Activated CD8-positive, alpha-beta T cell treated with anti-CD3 and anti-CD28 coated beads for 36 hours (primary cell): ENCODE measurements at regions of chr2 and their contacts with region 1.

Region 1: DNA sequence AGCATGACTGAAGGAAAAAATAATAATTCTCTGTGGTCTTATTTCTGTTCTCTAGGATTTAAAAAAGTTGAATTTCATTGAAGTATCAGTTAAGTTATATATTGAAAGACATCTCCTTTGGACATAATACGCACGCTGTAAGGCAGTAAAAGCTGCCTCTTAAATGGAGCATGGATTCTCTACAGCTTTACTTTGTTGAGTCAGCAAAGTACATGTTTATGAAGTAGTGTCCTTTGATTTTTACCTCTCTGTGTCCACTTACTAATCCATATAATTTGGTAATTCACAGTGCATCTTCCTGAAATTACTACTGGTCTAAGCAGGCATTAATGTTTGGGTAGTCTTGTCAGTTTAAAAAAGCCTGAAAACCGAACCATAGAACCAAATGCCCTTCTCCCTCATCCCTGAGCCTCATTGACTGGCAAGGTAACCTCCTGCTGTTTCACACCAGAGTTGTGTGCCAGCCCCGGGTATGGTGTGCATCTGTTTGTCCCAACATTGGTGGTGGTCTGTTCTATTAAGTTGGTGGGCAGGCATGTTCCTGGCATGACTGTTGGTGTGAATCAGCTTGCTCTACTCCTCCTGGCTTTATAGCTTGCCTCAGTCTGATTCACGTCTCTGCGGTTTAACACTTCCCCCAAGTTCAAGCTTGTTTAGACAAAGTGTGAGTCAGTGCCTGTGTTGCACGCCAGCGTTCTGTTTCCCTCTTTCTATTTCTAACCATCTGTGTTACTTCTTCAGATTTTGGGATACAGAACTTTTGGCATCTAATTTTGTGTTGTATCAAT is 71.0 kb upstream of the ITM2C start:
- DNase-seq: peak; percentile 91
- ATAC-seq: peak; percentile 87
- H3K4me3 Mint-ChIP-seq: peak overlapping the region; percentile 72
- H3K27ac Mint-ChIP-seq: no peak overlapping the region
- H3K4me1 Mint-ChIP-seq: peaks cover 54% of the 10 kb centered on the region
- H3K27me3 Mint-ChIP-seq: no peaks in the 10 kb centered on the region
- CTCF ChIP-seq: no peak

Region 2: GRCh38 chr2:229821316-229821715 is 972.5 kb before region 1 on chr2:
- CTCF ChIA-PET with region 1: no interaction called
- POLR2A ChIA-PET with region 1: no interaction called
- intact Hi-C with region 1: loop called (anchors 5 kb)
- DNase-seq: no peak
- ATAC-seq: no peak
- H3K4me3 Mint-ChIP-seq: no peak overlapping the region
- H3K27ac Mint-ChIP-seq: no peak overlapping the region
- H3K4me1 Mint-ChIP-seq: peaks cover 25% of the 10 kb centered on the region
- H3K27me3 Mint-ChIP-seq: no peaks in the 10 kb centered on the region
- CTCF ChIP-seq: no peak

Region 3: GRCh38 chr2:230643576-230644291 is 150.0 kb before region 1 on chr2:
- CTCF ChIA-PET with region 1: interaction called, 8 read pairs
- POLR2A ChIA-PET with region 1: interaction called, 4 read pairs
- intact Hi-C with region 1: loop called (anchors 2 kb)
- DNase-seq: peak; percentile 91
- ATAC-seq: peak; percentile 92
- H3K4me3 Mint-ChIP-seq: peak overlapping the region; percentile 34
- H3K27ac Mint-ChIP-seq: peak overlapping the region; percentile 97
- H3K4me1 Mint-ChIP-seq: peaks cover 38% of the 10 kb centered on the region
- H3K27me3 Mint-ChIP-seq: no peaks in the 10 kb centered on the region
- CTCF ChIP-seq: no peak

Region 4: GRCh38 chr2:230658877-230659652 is 134.7 kb before region 1 on chr2:
- CTCF ChIA-PET with region 1: interaction called, 11 read pairs
- POLR2A ChIA-PET with region 1: interaction called, 9 read pairs
- intact Hi-C with region 1: loop called (anchors 2 kb)
- DNase-seq: peak; percentile 92
- ATAC-seq: peak; percentile 71
- H3K4me3 Mint-ChIP-seq: peak overlapping the region; percentile 71
- H3K27ac Mint-ChIP-seq: peak overlapping the region; percentile 97
- H3K4me1 Mint-ChIP-seq: peaks cover 95% of the 10 kb centered on the region
- H3K27me3 Mint-ChIP-seq: no peaks in the 10 kb centered on the region
- CTCF ChIP-seq: no peak

Region 5: GRCh38 chr2:230712443-230713330 is 81.1 kb before region 1 on chr2 and contains the start of gene CAB39:
- CTCF ChIA-PET with region 1: interaction called, 65 read pairs
- POLR2A ChIA-PET with region 1: interaction called, 16 read pairs
- intact Hi-C with region 1: loop called (anchors 2 kb)
- DNase-seq: peak; percentile 84
- ATAC-seq: peak; percentile 89
- H3K4me3 Mint-ChIP-seq: peak within 1 kb of the TSS; percentile 88
- H3K27ac Mint-ChIP-seq: peak within 1 kb of the TSS; percentile 92
- H3K4me1 Mint-ChIP-seq: peaks cover 35% of the 10 kb centered on the region
- H3K27me3 Mint-ChIP-seq: no peaks in the 10 kb centered on the region
- CTCF ChIP-seq: peak; percentile 80
- total RNA-seq, gene CAB39: 119 to 120 TPM

Region 6: GRCh38 chr2:230762317-230762896 is 31.4 kb before region 1 on chr2:
- CTCF ChIA-PET with region 1: interaction called, 14 read pairs
- POLR2A ChIA-PET with region 1: interaction called, 5 read pairs
- intact Hi-C with region 1: no loop called
- DNase-seq: peak; percentile 53
- ATAC-seq: peak; percentile 92
- H3K4me3 Mint-ChIP-seq: no peak overlapping the region
- H3K27ac Mint-ChIP-seq: no peak overlapping the region
- H3K4me1 Mint-ChIP-seq: peaks cover 59% of the 10 kb centered on the region
- H3K27me3 Mint-ChIP-seq: no peaks in the 10 kb centered on the region
- CTCF ChIP-seq: peak; percentile 44

Region 7: DNA sequence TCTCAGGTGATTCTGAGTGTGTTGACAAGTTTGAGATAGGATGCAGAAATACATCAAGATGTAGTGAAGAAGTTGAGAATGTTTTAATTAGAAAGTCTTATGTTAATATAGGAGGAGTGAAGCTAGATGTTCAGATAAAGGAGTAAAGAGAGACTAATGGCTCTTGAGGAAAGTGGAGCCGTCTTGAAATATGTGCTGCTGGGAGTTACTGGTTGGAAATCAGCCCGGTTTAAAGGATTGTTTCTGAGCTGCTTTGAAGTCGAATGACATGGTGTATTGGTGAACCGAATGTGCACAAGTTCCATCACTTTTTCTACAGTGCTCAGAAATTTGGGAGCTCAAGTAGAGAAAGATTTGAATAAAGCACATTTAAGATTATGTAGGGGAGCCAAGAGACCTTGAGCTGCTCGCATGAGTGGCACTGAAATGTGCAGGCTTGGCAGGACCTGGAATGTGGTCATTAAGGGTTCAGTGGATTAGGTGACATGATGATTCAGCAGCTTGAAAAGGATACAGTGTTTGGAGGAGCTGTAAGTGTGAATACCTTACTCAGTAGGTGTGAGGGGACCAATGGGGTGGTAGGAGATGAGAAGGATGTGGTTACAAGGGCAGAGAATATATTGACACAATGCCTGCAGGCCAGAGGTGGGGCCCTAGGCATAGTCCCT is 12.5 kb before region 1 on chr2:
- CTCF ChIA-PET with region 1: interaction called, 16 read pairs
- POLR2A ChIA-PET with region 1: interaction called, 19 read pairs
- intact Hi-C with region 1: no loop called
- DNase-seq: peak; percentile 78
- ATAC-seq: peak; percentile 89
- H3K4me3 Mint-ChIP-seq: no peak overlapping the region
- H3K27ac Mint-ChIP-seq: peak overlapping the region; percentile 65
- H3K4me1 Mint-ChIP-seq: peaks cover 79% of the 10 kb centered on the region
- H3K27me3 Mint-ChIP-seq: no peaks in the 10 kb centered on the region
- CTCF ChIP-seq: no peak

Region 8: DNA sequence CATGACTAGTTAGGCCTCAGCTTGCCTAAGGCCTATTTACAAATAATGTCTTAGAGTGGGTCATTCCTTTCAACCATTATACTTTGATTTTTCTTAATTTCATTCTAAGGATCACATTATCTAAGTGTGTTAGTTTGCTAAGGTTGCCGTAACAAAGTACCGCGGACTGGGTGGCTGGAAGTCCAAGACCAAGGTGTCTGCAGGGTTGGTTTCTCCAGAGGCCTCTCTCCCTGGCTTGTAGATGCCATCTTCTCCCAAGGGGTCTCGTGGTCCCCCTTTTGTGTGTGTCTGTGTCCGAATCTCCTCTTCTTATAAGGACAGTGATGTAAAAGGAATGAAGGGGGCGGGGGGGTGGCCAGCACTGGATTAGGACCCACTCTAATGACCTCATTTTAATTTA is 52.6 kb after region 1 on chr2:
- CTCF ChIA-PET with region 1: no interaction called
- POLR2A ChIA-PET with region 1: no interaction called
- intact Hi-C with region 1: no loop called
- DNase-seq: no peak
- ATAC-seq: no peak
- H3K4me3 Mint-ChIP-seq: no peak overlapping the region
- H3K27ac Mint-ChIP-seq: no peak overlapping the region
- H3K4me1 Mint-ChIP-seq: peaks cover 10% of the 10 kb centered on the region
- H3K27me3 Mint-ChIP-seq: peaks cover 15% of the 10 kb centered on the region
- CTCF ChIP-seq: no peak

Region 9: DNA sequence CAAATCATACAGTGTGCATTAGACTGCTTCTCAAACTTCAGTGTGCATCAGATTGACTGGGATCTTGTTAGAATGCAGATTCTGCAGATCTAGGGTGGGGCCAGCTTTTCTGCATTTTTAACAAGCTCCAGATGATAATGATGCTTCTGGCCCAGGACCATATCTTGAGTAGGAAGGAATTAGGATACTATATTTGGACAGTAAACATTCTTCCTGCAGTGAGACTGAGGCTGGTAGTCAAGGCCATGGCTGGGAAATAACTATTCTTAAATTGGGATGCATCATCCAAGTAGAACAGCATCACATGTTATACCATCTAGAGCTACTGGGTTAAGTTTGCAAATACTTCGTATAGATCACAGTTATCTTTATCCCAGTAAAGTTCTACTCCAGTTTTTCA is 376.3 kb after region 1 on chr2:
- CTCF ChIA-PET with region 1: no interaction called
- POLR2A ChIA-PET with region 1: no interaction called
- intact Hi-C with region 1: no loop called
- DNase-seq: no peak
- ATAC-seq: no peak
- H3K4me3 Mint-ChIP-seq: no peak overlapping the region
- H3K27ac Mint-ChIP-seq: no peak overlapping the region
- H3K4me1 Mint-ChIP-seq: peaks cover 25% of the 10 kb centered on the region
- H3K27me3 Mint-ChIP-seq: no peaks in the 10 kb centered on the region
- CTCF ChIP-seq: no peak